ENCODE measurements at regions of chr2 and their contacts with region 1.

Region 1: DNA sequence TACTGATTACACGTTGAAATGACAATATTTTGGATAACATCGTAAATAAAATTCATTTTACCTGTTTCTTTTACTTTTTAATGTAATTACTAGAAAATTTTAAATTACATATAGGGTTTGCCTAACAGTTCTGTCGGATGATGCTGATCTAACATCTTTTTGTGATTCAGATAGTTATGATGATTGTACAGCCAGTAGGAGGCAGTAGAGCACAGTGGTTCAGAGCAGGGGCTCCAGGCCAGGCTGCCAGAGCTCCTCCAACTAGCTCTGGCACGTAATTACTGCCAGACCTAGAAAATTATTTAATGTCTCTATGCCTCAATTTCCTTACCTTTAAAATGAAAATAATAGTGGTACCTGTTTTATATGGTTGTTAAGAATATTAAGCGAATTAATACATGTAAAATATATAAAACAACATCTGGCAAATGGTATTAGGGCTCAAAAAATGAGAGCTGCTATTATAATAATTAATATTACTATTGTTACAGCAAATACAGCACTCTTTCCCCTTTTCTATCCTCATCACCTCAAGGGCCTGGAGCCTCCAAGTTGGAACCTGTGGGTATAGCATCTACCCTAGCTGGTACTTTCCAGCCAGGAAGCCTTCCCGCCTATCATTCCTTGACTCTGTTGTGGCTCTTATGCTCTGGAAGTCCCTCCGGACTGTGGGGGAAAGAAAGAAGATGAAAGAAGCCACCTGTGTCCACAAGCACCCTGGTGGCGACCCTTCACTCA is 47.7 kb upstream of the PLA2R1 start:
- DNase-seq: no peak
- ATAC-seq: peak; percentile 54
- H3K4me3 Mint-ChIP-seq: no peak overlapping the region
- H3K27ac Mint-ChIP-seq: no peak overlapping the region
- H3K4me1 Mint-ChIP-seq: no peaks in the 10 kb centered on the region
- H3K27me3 Mint-ChIP-seq: peaks cover 20% of the 10 kb centered on the region
- CTCF ChIP-seq: no peak

Region 2: GRCh38 chr2:160210599-160211138 is 100.6 kb after region 1 on chr2:
- CTCF ChIA-PET with region 1: interaction called, 20 read pairs
- POLR2A ChIA-PET with region 1: no interaction called
- intact Hi-C with region 1: loop called (anchors 1 kb)
- DNase-seq: peak; percentile 60
- ATAC-seq: peak; percentile 99
- H3K4me3 Mint-ChIP-seq: no peak overlapping the region
- H3K27ac Mint-ChIP-seq: no peak overlapping the region
- H3K4me1 Mint-ChIP-seq: peaks cover 31% of the 10 kb centered on the region
- H3K27me3 Mint-ChIP-seq: peaks cover 9% of the 10 kb centered on the region
- CTCF ChIP-seq: peak; percentile 85

Region 3: DNA sequence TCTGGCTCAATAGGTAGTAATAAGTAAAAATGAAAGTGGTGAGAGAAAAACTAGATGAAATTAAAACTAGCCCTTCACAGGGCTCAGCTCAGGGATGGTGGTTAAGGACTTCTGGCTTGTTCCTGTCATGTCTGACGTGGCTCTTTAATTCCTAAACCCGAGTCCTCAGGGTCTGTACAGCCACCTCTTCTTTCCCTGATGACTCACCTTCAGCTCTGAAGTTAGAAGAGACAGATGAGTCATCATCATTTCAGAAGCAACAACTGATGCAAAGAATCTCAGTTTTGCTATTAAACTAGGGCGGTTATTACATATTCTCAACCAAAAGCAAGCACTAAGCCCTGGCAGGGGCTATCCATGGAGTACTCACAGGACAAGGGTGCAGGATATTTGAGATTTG is 114.0 kb after region 1 on chr2:
- CTCF ChIA-PET with region 1: no interaction called
- POLR2A ChIA-PET with region 1: no interaction called
- intact Hi-C with region 1: no loop called
- DNase-seq: no peak
- ATAC-seq: peak; percentile 94
- H3K4me3 Mint-ChIP-seq: no peak overlapping the region
- H3K27ac Mint-ChIP-seq: peak overlapping the region; percentile 38
- H3K4me1 Mint-ChIP-seq: peaks cover 10% of the 10 kb centered on the region
- H3K27me3 Mint-ChIP-seq: peaks cover 12% of the 10 kb centered on the region
- CTCF ChIP-seq: no peak

Region 4: DNA sequence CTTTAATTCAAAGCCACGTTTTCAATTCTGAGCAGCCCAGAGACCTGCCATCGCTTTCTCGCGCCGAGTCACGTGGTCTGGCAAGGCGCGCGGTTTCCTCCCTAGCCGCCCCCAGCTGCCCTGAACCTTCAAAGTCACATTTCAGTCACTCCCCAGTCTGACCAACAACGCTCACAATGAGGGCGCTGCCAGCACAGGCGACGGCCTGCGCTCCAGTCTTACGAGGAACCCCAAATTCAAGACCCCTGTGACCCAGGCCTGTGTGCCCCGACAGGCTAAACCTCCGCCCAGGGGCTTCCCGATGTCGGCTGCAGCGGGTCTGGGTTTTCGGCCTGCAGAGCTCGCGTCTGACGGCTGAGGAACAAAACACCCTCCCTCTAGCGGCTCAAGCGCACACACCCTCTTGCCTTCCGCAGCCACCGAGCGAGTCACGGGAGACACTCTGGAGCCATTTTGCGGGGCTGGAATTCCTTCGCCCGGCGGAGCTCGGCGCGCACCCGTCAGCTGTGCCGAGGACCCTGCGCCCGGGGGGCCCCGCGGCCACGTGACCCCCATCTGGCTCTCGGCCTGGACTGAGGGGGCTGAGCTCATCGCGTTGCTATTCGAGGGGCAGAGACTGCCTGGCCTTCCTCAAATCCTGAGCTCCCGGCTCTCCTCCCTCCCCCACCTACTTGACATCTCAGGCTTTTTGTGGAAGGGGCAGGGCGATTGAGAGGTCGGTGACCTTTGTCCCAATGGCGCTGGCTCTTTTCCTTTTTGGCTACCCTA is 159.9 kb after region 1 on chr2:
- CTCF ChIA-PET with region 1: interaction called, 12 read pairs
- POLR2A ChIA-PET with region 1: no interaction called
- intact Hi-C with region 1: loop called (anchors 1 kb)
- DNase-seq: peak; percentile 64
- ATAC-seq: peak; percentile 96
- H3K4me3 Mint-ChIP-seq: peak overlapping the region; percentile 85
- H3K27ac Mint-ChIP-seq: peak overlapping the region; percentile 59
- H3K4me1 Mint-ChIP-seq: peaks cover 11% of the 10 kb centered on the region
- H3K27me3 Mint-ChIP-seq: no peaks in the 10 kb centered on the region
- CTCF ChIP-seq: no peak

Region 5: GRCh38 chr2:160994141-160995002 is 884.3 kb after region 1 on chr2:
- CTCF ChIA-PET with region 1: interaction called, 17 read pairs
- POLR2A ChIA-PET with region 1: no interaction called
- intact Hi-C with region 1: loop called (anchors 1 kb)
- DNase-seq: no peak
- ATAC-seq: peak; percentile 37
- H3K4me3 Mint-ChIP-seq: no peak overlapping the region
- H3K27ac Mint-ChIP-seq: no peak overlapping the region
- H3K4me1 Mint-ChIP-seq: peaks cover 3% of the 10 kb centered on the region
- H3K27me3 Mint-ChIP-seq: no peaks in the 10 kb centered on the region
- CTCF ChIP-seq: peak; percentile 38

Region 6: GRCh38 chr2:161063157-161063954 is 953.3 kb after region 1 on chr2:
- CTCF ChIA-PET with region 1: no interaction called
- POLR2A ChIA-PET with region 1: no interaction called
- intact Hi-C with region 1: loop called (anchors 2 kb)
- DNase-seq: peak; percentile 18
- ATAC-seq: peak; percentile 93
- H3K4me3 Mint-ChIP-seq: no peak overlapping the region
- H3K27ac Mint-ChIP-seq: no peak overlapping the region
- H3K4me1 Mint-ChIP-seq: peaks cover 4% of the 10 kb centered on the region
- H3K27me3 Mint-ChIP-seq: no peaks in the 10 kb centered on the region
- CTCF ChIP-seq: peak; percentile 94